ENCODE measurements at regions of chr13 and their contacts with region 1.

Region 1: GRCh38 chr13:52104624-52105023 is 24.2 kb downstream of the NEK5 start:
- DNase-seq: no peak
- H3K4me3 ChIP-seq: no peak overlapping the region
- CTCF ChIP-seq: no peak

Region 2: GRCh38 chr13:51895906-51896888 is 208.4 kb before region 1 on chr13:
- in situ Hi-C with region 1: loop called (anchors 25 kb)
- DNase-seq: peak; percentile 18
- H3K4me3 ChIP-seq: no peak overlapping the region
- CTCF ChIP-seq: peak; percentile 87

Region 3: GRCh38 chr13:52043675-52044074 is 60.9 kb before region 1 on chr13:
- in situ Hi-C with region 1: no loop called
- DNase-seq: no peak
- H3K4me3 ChIP-seq: no peak overlapping the region
- CTCF ChIP-seq: no peak

Region 4: DNA sequence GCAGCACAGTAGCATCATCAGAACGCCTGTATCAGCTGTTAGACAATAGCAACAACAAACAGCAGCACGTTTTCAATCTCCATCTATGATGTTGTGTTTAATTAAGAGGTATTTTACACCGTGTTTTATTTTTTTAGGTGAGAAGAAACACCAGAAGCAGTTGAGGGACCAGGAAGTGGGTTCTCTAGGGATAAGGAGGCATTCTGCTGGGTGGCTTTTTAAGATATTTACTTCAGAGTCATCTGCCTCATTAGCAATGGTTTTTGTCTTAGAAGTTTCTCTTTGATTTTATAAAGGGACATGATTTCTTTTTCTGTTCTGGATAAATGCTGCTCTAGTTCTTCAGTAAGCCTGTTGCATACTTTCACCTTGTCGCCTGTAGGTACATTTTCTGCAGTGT is 358.9 kb after region 1 on chr13:
- in situ Hi-C with region 1: no loop called
- DNase-seq: no peak
- H3K4me3 ChIP-seq: no peak overlapping the region
- CTCF ChIP-seq: no peak

Measured in astrocyte of the cerebellum (primary cell).